Naive thymus-derived CD4-positive, alpha-beta T cell (primary cell): ENCODE measurements at regions of chr17 and their contacts with region 1.

Region 1: DNA sequence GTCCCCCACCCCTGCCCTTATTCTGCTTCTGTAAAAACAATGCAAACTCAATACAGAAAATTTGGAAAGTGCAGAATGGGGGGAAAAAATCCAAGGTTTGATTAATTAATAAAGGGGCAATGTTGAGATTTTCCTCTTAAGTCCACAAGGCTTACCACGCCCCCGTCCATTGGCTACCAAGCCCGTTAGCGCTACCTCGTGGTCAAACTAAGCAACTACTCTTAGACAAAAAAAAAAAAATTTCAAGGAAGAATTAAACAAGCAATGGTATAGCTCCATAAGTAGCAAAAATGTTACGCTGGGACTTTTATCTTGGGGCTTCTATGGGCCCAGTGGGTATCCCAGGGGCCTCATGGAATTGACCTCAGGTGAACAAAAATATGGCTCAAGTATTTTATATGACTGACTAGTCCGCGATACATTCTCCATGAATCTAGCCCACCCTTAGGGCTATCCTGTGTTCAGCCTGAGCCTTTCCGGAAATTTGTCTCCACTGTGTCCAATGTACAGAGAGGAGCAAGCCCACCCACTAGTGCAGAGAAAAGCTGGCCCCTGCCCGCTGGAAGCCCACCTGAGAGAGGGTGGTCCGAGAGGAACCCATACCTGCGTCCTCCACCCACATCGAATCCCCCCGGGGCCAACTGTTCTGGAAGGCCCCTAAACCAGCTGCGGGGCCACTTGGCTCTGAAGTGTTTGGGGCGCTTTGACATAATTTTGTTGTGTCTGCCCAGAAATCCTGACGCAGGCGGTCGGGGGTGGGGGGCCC is 19.1 kb upstream of the TEX2 start:
- DNase-seq: peak in 8 of 9 donors; percentile 31 to 61 (median 54)
- ATAC-seq: peak; percentile 83
- H3K4me3 ChIP-seq: no peak overlapping the region
- H3K4me3 Mint-ChIP-seq: no peak overlapping the region
- H3K27ac ChIP-seq: no peak overlapping the region
- H3K27ac Mint-ChIP-seq: peak overlapping the region in 1 of 9 donors; percentile 20
- H3K4me1 ChIP-seq: peaks cover 0 to 5% of the 10 kb centered on the region in 2 donors
- H3K4me1 Mint-ChIP-seq: peaks cover 0 to 7% (median 0%) of the 10 kb centered on the region in 7 donors
- H3K27me3 ChIP-seq: no peaks in the 10 kb centered on the region
- H3K27me3 Mint-ChIP-seq: peaks cover 0 to 8% (median 0%) of the 10 kb centered on the region in 5 donors

Region 2: DNA sequence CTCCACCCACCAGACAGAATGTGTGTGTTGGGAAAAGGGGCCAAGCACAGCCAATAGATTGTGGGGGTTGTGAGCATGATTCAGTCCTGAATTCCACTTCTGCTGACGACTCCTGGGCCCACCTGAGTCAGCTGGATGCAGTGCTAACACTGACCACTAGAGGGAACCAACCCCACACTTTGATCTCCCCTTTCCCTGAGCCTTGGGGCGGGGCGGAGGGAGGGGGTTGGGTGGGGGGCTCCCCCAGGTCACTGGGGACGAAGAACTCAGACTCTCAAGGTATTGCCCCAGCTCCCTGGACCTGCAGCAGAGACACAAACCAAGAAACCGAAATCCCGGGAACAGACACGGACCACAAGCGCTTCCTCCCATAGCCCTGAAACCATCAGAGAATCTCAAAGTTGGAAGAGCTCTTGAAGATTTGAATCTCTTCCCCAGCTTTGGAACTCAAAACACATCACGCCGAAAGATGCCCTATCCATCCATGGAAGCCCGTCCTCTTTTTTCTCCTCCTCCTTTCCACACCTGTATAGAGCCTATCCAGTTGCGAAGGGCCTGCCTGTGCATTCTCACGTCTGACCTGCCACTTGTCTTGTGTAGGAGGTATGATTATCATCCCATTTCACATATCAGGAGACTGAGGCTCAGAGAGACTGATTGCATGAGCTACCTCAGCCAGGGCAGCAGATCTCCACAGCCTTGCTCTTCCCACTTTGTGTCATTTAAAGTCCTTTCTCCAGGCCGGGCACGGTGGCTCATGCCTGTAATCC is 370.3 kb before region 1 on chr17:
- CTCF ChIA-PET with region 1: interaction called, 5 read pairs
- POLR2A ChIA-PET with region 1: interaction called, 3 read pairs
- intact Hi-C with region 1: loop called (anchors 2 to 5 kb)
- DNase-seq: peak; percentile 30 to 64 (median 49)
- ATAC-seq: peak; percentile 88
- H3K4me3 ChIP-seq: no peak overlapping the region
- H3K4me3 Mint-ChIP-seq: peak overlapping the region in 1 of 10 donors; percentile 25
- H3K27ac ChIP-seq: no peak overlapping the region
- H3K27ac Mint-ChIP-seq: peak overlapping the region in 1 of 9 donors; percentile 78
- H3K4me1 ChIP-seq: no peaks in the 10 kb centered on the region
- H3K4me1 Mint-ChIP-seq: peaks cover 0 to 10% (median 0%) of the 10 kb centered on the region in 7 donors
- H3K27me3 ChIP-seq: no peaks in the 10 kb centered on the region
- H3K27me3 Mint-ChIP-seq: peaks cover 0 to 28% (median 0%) of the 10 kb centered on the region in 5 donors

Region 3: DNA sequence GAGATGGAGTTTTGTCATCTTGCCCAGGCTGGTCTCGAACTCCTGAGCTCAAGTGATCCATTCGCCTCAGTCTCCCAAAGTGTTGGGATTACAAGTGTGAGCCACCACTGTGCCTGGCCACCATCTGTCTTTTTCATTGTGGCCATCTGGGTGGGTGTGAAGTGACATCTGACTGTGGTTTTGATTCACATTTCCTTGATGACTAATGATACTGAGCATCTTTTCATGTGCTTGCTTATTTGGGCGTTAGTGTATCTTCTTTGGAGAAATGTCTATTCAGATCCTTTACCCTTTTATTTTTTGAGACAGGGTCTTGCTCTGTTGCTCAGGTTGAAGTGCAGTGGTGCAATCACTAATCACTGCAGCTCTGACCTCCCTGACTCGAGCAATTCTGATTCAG is 98.3 kb before region 1 on chr17:
- CTCF ChIA-PET with region 1: no interaction called
- POLR2A ChIA-PET with region 1: no interaction called
- intact Hi-C with region 1: no loop called
- DNase-seq: peak in 1 of 9 donors; percentile 26
- ATAC-seq: peak; percentile 63
- H3K4me3 ChIP-seq: no peak overlapping the region
- H3K4me3 Mint-ChIP-seq: no peak overlapping the region
- H3K27ac ChIP-seq: no peak overlapping the region
- H3K27ac Mint-ChIP-seq: no peak overlapping the region
- H3K4me1 ChIP-seq: no peaks in the 10 kb centered on the region
- H3K4me1 Mint-ChIP-seq: peaks cover 0 to 10% (median 0%) of the 10 kb centered on the region in 7 donors
- H3K27me3 ChIP-seq: no peaks in the 10 kb centered on the region
- H3K27me3 Mint-ChIP-seq: no peaks in the 10 kb centered on the region

Region 4: DNA sequence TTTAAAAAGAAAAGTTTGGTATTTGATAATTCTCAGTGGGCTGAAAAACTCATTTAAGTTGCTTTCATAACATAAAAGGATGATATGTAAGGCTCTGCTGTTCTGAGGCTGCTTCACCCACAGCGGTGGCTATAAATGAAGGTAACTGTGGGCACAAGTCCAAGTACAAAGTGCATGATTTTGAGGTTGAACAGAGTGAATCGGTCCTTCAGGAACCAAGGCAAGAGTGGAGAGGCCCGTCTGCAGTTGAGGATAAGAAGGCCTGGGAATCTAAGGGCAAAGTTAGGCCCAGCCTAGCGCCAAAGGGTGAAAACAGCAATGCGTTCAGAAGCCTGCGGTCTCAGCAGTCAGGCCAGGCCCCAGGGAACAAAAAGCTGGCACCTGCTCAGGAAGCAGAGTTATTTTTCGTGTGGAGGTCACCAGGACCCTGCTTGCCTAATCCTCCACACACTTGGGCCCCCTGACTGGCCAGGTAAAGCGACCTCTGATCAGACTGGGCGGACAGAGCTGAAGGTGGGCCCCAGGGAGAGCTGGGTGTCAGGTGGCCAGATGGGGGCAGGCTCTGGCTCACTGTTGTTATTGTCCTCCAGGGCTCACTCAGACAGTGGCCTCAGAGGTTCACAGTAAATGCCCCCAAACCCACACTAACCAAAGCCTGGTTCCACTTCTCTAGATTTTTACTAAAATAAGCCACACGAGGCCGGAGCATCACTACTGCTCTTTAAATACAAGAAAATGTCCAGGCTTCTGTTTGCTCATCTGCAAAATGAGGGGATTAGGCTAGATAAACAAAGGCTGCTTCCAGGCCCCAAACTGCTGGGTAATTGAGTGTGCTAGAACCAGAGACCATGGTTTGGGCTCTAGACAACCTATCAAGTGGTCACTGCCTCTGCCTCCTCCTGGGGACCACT is 65.6 kb before region 1 on chr17:
- CTCF ChIA-PET with region 1: interaction called, 3 read pairs
- POLR2A ChIA-PET with region 1: no interaction called
- intact Hi-C with region 1: loop called in 1 of 2 experiments (anchors 2 kb)
- DNase-seq: no peak
- ATAC-seq: no peak
- H3K4me3 ChIP-seq: no peak overlapping the region
- H3K4me3 Mint-ChIP-seq: peak overlapping the region in 1 of 10 donors; percentile 36
- H3K27ac ChIP-seq: no peak overlapping the region
- H3K27ac Mint-ChIP-seq: peak overlapping the region in 7 of 9 donors; percentile 44 to 88 (median 77)
- H3K4me1 ChIP-seq: peaks cover 0 to 7% of the 10 kb centered on the region in 2 donors
- H3K4me1 Mint-ChIP-seq: peaks cover 9 to 47% (median 40%) of the 10 kb centered on the region in 7 donors
- H3K27me3 ChIP-seq: no peaks in the 10 kb centered on the region
- H3K27me3 Mint-ChIP-seq: no peaks in the 10 kb centered on the region